B cell (primary cell): ENCODE measurements at regions of chr6 and their contacts with region 1.

Region 1: DNA sequence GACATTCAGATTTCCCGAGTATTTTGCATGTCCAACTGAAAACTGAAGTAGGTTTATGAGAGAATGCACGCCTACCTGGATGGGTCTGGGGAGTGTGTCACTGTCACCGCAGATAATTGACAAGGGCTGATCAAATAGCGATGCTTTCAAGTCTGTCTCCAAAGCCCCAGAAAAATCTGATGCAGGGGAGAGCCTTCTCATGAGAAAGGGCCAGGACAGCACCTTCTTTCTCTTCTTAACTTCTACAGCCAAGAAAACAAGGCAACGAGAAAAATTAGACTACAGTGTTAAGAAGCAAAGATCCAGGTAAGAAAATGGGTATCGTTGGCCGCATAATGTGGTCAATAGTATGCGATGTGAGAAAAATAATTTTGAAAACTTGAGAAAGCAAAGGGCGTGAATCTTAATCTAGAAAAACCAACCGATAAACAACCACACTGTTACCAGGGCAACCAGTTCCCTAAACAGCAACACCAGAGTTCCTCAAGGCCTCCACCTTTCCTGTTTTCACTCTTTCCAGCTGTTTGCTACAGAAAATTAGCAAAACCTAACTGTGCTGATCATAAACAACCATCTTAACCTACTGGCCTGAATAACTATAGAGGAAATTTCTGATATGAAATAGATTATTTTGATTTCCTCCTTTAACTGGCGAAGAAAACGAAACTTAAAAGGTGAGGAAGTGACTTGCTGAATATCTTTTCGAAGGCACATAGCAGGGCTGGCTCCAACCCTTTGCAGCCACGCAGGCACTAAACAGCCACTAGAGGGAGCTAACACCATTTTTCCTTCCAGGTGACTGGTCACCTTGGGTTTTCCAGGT is 2.6 kb downstream of the TAGAP start:
- DNase-seq: peak; percentile 93
- ATAC-seq: peak; percentile 44
- H3K4me3 ChIP-seq: peak overlapping the region; percentile 72 to 100 (median 93)
- H3K4me3 Mint-ChIP-seq: peak overlapping the region; percentile 100
- H3K27ac ChIP-seq: peak overlapping the region; percentile 98 to 99
- H3K27ac Mint-ChIP-seq: peak overlapping the region; percentile 99
- H3K4me1 ChIP-seq: peaks cover 61 to 67% of the 10 kb centered on the region in 2 donors
- H3K4me1 Mint-ChIP-seq: peaks cover 72% of the 10 kb centered on the region
- H3K27me3 ChIP-seq: no peaks in the 10 kb centered on the region
- H3K27me3 Mint-ChIP-seq: no peaks in the 10 kb centered on the region
- CTCF ChIP-seq: peak; percentile 100

Region 2: GRCh38 chr6:158819213-158819909 is 222.9 kb before region 1 on chr6 and contains the start of gene EZR:
- CTCF ChIA-PET with region 1: no interaction called
- POLR2A ChIA-PET with region 1: no interaction called
- intact Hi-C with region 1: loop called (anchors 5 kb)
- DNase-seq: peak; percentile 94
- ATAC-seq: peak; percentile 69
- H3K4me3 ChIP-seq: peak within 1 kb of the TSS; percentile 22 to 100 (median 69)
- H3K4me3 Mint-ChIP-seq: peak within 1 kb of the TSS; percentile 88
- H3K27ac ChIP-seq: peak within 1 kb of the TSS; percentile 96 to 99
- H3K27ac Mint-ChIP-seq: peak within 1 kb of the TSS; percentile 99
- H3K4me1 ChIP-seq: peaks cover 25 to 36% of the 10 kb centered on the region in 2 donors
- H3K4me1 Mint-ChIP-seq: peaks cover 36% of the 10 kb centered on the region
- H3K27me3 ChIP-seq: no peaks in the 10 kb centered on the region
- H3K27me3 Mint-ChIP-seq: no peaks in the 10 kb centered on the region
- CTCF ChIP-seq: no peak
- total RNA-seq, gene EZR: 943 and 945 TPM in 2 replicates

Region 3: GRCh38 chr6:159056003-159056402 is 13.8 kb after region 1 on chr6:
- CTCF ChIA-PET with region 1: interaction called, 11 read pairs
- POLR2A ChIA-PET with region 1: interaction called, 13 read pairs
- intact Hi-C with region 1: loop called (anchors 1 kb)
- DNase-seq: peak; percentile 80
- ATAC-seq: peak; percentile 73
- H3K4me3 ChIP-seq: peak overlapping the region; percentile 15 to 55 (median 33)
- H3K4me3 Mint-ChIP-seq: peak overlapping the region; percentile 74
- H3K27ac ChIP-seq: peak overlapping the region; percentile 80 to 86
- H3K27ac Mint-ChIP-seq: peak overlapping the region; percentile 89
- H3K4me1 ChIP-seq: peaks cover 63 to 68% of the 10 kb centered on the region in 2 donors
- H3K4me1 Mint-ChIP-seq: peaks cover 74% of the 10 kb centered on the region
- H3K27me3 ChIP-seq: no peaks in the 10 kb centered on the region
- H3K27me3 Mint-ChIP-seq: no peaks in the 10 kb centered on the region
- CTCF ChIP-seq: no peak

Region 4: GRCh38 chr6:159084493-159085091 is 42.4 kb after region 1 on chr6:
- CTCF ChIA-PET with region 1: interaction called, 9 read pairs
- POLR2A ChIA-PET with region 1: interaction called, 6 read pairs
- intact Hi-C with region 1: loop called (anchors 1 kb)
- DNase-seq: no peak
- ATAC-seq: no peak
- H3K4me3 ChIP-seq: no peak overlapping the region
- H3K4me3 Mint-ChIP-seq: no peak overlapping the region
- H3K27ac ChIP-seq: no peak overlapping the region
- H3K27ac Mint-ChIP-seq: no peak overlapping the region
- H3K4me1 ChIP-seq: peaks cover 32 to 33% of the 10 kb centered on the region in 2 donors
- H3K4me1 Mint-ChIP-seq: peaks cover 27% of the 10 kb centered on the region
- H3K27me3 ChIP-seq: no peaks in the 10 kb centered on the region
- H3K27me3 Mint-ChIP-seq: no peaks in the 10 kb centered on the region
- CTCF ChIP-seq: no peak

Region 5: GRCh38 chr6:159110013-159110412 is 67.8 kb after region 1 on chr6:
- CTCF ChIA-PET with region 1: interaction called, 497 read pairs
- POLR2A ChIA-PET with region 1: interaction called, 60 read pairs
- intact Hi-C with region 1: no loop called
- DNase-seq: peak; percentile 58
- ATAC-seq: no peak
- H3K4me3 ChIP-seq: no peak overlapping the region
- H3K4me3 Mint-ChIP-seq: peak overlapping the region; percentile 37
- H3K27ac ChIP-seq: peak overlapping the region; percentile 22 to 94
- H3K27ac Mint-ChIP-seq: peak overlapping the region; percentile 82
- H3K4me1 ChIP-seq: peaks cover 89 to 93% of the 10 kb centered on the region in 2 donors
- H3K4me1 Mint-ChIP-seq: peaks cover 85% of the 10 kb centered on the region
- H3K27me3 ChIP-seq: no peaks in the 10 kb centered on the region
- H3K27me3 Mint-ChIP-seq: no peaks in the 10 kb centered on the region
- CTCF ChIP-seq: peak; percentile 81

Region 6: GRCh38 chr6:159134701-159135364 is 92.6 kb after region 1 on chr6:
- CTCF ChIA-PET with region 1: interaction called, 164 read pairs
- POLR2A ChIA-PET with region 1: interaction called, 7 read pairs
- intact Hi-C with region 1: loop called (anchors 1 kb)
- DNase-seq: peak; percentile 89
- ATAC-seq: peak; percentile 97
- H3K4me3 ChIP-seq: peak overlapping the region in 3 of 5 experiments; percentile 27 to 45 (median 28)
- H3K4me3 Mint-ChIP-seq: peak overlapping the region; percentile 66
- H3K27ac ChIP-seq: peak overlapping the region; percentile 39 to 42
- H3K27ac Mint-ChIP-seq: peak overlapping the region; percentile 76
- H3K4me1 ChIP-seq: peaks cover 12 to 16% of the 10 kb centered on the region in 2 donors
- H3K4me1 Mint-ChIP-seq: peaks cover 22% of the 10 kb centered on the region
- H3K27me3 ChIP-seq: no peaks in the 10 kb centered on the region
- H3K27me3 Mint-ChIP-seq: no peaks in the 10 kb centered on the region
- CTCF ChIP-seq: peak; percentile 98